GM13976 (cell line): ENCODE measurements at regions of chr3 and their contacts with region 1.

Region 1: GRCh38 chr3:151838583-151839312 is 24.8 kb downstream of the AADAC start:
- DNase-seq: peak; percentile 42
- CTCF ChIP-seq: peak; percentile 71

Region 2: GRCh38 chr3:151168269-151169094 is 670.3 kb before region 1 on chr3:
- in situ Hi-C with region 1: loop called (anchors 10 kb)
- DNase-seq: peak; percentile 65
- CTCF ChIP-seq: peak; percentile 75

Region 3: GRCh38 chr3:151439652-151440129 is 399.1 kb before region 1 on chr3:
- in situ Hi-C with region 1: loop called (anchors 10 kb)
- DNase-seq: peak; percentile 46
- CTCF ChIP-seq: peak; percentile 56

Region 4: GRCh38 chr3:151795276-151795675 is 43.5 kb before region 1 on chr3:
- in situ Hi-C with region 1: no loop called
- DNase-seq: no peak
- CTCF ChIP-seq: no peak

Region 5: GRCh38 chr3:151918253-151919029 is 79.7 kb after region 1 on chr3:
- in situ Hi-C with region 1: loop called (anchors 10 kb)
- DNase-seq: peak; percentile 62
- CTCF ChIP-seq: peak; percentile 45